Aorta (tissue), 5 donors: ENCODE measurements at regions of chr15 and their contacts with region 1.

Region 1: GRCh38 chr15:65054333-65055200 is 9.4 kb downstream of the SLC51B start:
- DNase-seq: peak; percentile 81 to 91
- ATAC-seq: peak; percentile 82
- H3K4me3 ChIP-seq: no peak overlapping the region
- H3K27ac ChIP-seq: peak overlapping the region in 1 of 2 donors; percentile 82
- H3K4me1 ChIP-seq: no peaks in the 10 kb centered on the region
- H3K27me3 ChIP-seq: no peaks in the 10 kb centered on the region

Region 2: DNA sequence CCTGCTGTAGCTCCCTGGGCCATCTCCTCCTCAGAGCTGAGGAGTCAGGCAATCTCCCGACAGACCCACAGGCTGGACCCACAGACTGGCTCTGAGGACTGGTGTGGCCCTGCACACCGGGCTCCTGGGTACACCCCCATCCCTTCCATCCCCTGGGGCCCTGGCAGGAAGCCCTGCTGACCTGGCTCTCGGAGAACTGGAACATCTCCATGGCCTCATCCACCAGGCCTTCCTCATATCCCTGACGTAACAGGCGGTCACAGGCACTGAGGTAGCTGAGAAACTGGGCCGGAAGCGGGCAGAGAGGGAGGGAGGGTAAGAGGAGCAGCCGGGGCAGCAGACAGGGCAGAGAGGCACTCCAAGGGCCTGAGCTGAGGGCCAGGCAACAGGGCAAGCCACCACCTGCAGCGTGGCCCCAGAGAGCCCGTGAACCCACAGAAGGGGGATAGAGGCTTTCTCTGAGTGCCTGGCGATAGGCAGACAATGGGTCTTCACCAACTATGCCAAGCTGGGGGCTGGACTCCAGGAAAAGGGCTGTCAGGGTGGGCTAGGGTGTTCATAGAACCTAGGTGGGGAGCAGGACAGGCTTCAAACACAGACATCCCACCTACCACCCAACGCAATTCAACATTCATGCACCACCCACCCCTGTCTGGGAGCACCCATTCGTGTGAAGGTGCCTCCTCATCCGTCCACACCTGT is 39.9 kb after region 1 on chr15:
- intact Hi-C with region 1: loop called in 1 of 2 experiments (anchors 5 kb)
- DNase-seq: peak in 1 of 2 donors; percentile 59
- ATAC-seq: no peak
- H3K4me3 ChIP-seq: no peak overlapping the region
- H3K27ac ChIP-seq: no peak overlapping the region
- H3K4me1 ChIP-seq: no peaks in the 10 kb centered on the region
- H3K27me3 ChIP-seq: no peaks in the 10 kb centered on the region

Region 3: DNA sequence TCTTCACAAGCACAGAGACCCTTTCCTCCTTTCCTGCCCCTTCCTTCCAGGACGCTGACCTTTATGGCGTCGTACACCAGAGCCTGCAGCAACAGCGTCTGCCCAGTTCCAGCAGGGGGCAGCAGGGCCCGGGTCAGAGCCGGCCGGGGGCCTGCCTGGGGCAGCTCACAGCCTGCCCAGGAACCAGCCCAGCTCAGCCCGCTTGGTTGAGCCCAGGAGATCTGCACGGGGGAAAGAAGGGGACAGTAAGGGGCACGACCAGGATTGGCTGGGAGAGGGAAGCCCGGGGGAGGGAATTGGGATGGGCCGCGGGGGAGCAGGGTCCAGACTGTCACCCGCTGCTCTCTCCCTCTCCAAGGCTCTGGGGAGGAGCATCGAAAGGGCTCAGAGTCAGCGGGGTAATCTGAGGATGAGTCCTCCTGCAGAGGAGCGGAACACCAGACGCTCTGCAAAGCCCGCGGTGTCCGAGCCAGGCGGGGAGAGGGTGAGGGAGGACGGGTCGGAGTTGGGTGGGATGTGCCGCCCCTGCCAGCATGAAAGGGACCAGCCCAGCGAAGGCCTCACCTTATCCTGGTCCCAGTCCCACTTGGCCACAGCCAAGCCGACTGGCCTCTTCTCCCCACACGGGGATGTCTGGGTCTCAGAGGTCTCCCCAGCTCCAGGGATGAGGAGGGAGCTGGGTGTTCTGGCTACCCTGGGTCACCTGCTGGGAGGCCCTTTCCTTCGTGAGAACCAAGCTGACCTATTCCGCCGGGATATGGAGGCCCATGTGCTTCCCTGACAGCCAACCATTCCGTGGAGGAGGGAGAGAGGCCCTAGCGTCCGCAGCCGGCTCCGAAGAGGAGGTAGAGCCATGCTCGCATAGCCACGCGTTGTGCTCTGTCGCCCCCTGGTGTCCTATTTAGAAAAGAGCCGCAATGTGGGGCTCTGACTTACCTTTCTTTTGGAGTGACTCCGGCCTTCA is 330.6 kb after region 1 on chr15:
- intact Hi-C with region 1: no loop called
- DNase-seq: peak; percentile 88 to 92
- ATAC-seq: peak; percentile 94
- H3K4me3 ChIP-seq: no peak overlapping the region
- H3K27ac ChIP-seq: no peak overlapping the region
- H3K4me1 ChIP-seq: no peaks in the 10 kb centered on the region
- H3K27me3 ChIP-seq: no peaks in the 10 kb centered on the region